ENCODE measurements at regions of chr3 and their contacts with region 1.

Region 1: GRCh38 chr3:187319699-187320302 is 28.3 kb upstream of the MASP1 start:
- DNase-seq: peak; percentile 77
- H3K4me3 Mint-ChIP-seq: no peak overlapping the region
- H3K27ac Mint-ChIP-seq: no peak overlapping the region
- H3K4me1 Mint-ChIP-seq: peaks cover 6% of the 10 kb centered on the region
- H3K27me3 Mint-ChIP-seq: peaks cover 41% of the 10 kb centered on the region
- CTCF ChIP-seq: peak; percentile 80

Region 2: DNA sequence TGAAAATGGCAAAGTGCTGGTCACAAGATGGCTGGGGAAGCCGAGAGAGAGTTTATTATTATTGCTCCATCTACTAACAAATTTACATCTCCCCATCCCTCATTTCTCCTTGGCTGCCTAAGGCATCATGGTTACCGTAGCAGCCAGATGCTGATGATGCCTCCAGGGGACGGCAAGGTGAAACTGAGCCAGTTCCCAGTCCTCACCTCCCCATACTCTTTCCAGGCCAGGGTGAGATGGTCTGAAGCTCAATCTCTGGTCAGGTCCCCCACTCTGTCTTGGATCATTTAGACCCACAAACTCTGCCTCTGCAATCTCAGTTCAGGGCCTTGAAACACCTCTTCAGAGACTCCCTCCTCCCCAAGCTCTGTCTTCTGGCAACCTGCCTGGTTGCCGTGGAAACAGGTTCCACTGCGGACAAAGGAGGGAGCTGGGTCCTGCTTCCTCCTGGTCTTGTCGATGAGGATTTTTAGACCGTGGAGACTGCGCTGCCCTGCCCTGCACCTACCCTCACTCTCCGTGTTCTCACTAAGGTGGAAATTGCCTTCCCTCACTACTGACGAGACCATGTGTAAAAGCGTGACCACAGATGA is 122.6 kb before region 1 on chr3 and contains the start of gene RTP1:
- CTCF ChIA-PET with region 1: interaction called, 15 read pairs
- POLR2A ChIA-PET with region 1: no interaction called
- intact Hi-C with region 1: no loop called
- DNase-seq: no peak
- H3K4me3 Mint-ChIP-seq: no peak within 1 kb of the TSS
- H3K27ac Mint-ChIP-seq: no peak within 1 kb of the TSS
- H3K4me1 Mint-ChIP-seq: peaks cover 10% of the 10 kb centered on the region
- H3K27me3 Mint-ChIP-seq: no peaks in the 10 kb centered on the region
- CTCF ChIP-seq: no peak
- total RNA-seq, gene RTP1: not detected in 2 replicates

Region 3: GRCh38 chr3:187252311-187252710 is 67.5 kb before region 1 on chr3:
- CTCF ChIA-PET with region 1: interaction called, 13 read pairs
- POLR2A ChIA-PET with region 1: no interaction called
- intact Hi-C with region 1: no loop called
- DNase-seq: no peak
- H3K4me3 Mint-ChIP-seq: no peak overlapping the region
- H3K27ac Mint-ChIP-seq: no peak overlapping the region
- H3K4me1 Mint-ChIP-seq: no peaks in the 10 kb centered on the region
- H3K27me3 Mint-ChIP-seq: peaks cover 16% of the 10 kb centered on the region
- CTCF ChIP-seq: no peak

Region 4: DNA sequence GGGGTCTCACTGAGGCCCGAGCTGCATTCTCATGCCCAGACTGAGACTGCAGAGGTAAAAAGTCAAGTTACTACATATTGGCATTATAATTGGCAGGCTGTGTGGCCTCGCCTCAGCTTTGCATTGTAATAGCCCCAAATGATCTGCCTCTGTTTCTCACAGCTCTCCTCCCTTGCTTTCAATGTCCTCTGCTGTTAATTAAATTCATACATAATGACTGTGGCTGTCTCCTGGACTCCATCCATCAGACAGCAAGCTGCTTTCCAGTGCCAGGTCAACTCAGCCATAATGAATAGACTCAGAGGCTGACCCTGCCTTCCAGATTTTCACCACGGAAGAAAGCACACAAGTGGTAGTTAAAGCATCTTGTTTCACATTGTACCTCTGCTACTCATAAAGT is 40.8 kb after region 1 on chr3:
- CTCF ChIA-PET with region 1: interaction called, 11 read pairs
- POLR2A ChIA-PET with region 1: no interaction called
- intact Hi-C with region 1: no loop called
- DNase-seq: no peak
- H3K4me3 Mint-ChIP-seq: no peak overlapping the region
- H3K27ac Mint-ChIP-seq: no peak overlapping the region
- H3K4me1 Mint-ChIP-seq: no peaks in the 10 kb centered on the region
- H3K27me3 Mint-ChIP-seq: no peaks in the 10 kb centered on the region
- CTCF ChIP-seq: no peak

Region 5: GRCh38 chr3:187490366-187490765 is 170.6 kb after region 1 on chr3:
- CTCF ChIA-PET with region 1: no interaction called
- POLR2A ChIA-PET with region 1: no interaction called
- intact Hi-C with region 1: no loop called
- DNase-seq: no peak
- H3K4me3 Mint-ChIP-seq: no peak overlapping the region
- H3K27ac Mint-ChIP-seq: no peak overlapping the region
- H3K4me1 Mint-ChIP-seq: no peaks in the 10 kb centered on the region
- H3K27me3 Mint-ChIP-seq: peaks cover 53% of the 10 kb centered on the region
- CTCF ChIP-seq: no peak

Region 6: GRCh38 chr3:187651282-187651681 is 331.5 kb after region 1 on chr3:
- CTCF ChIA-PET with region 1: interaction called, 10 read pairs
- POLR2A ChIA-PET with region 1: no interaction called
- intact Hi-C with region 1: no loop called
- DNase-seq: no peak
- H3K4me3 Mint-ChIP-seq: no peak overlapping the region
- H3K27ac Mint-ChIP-seq: no peak overlapping the region
- H3K4me1 Mint-ChIP-seq: no peaks in the 10 kb centered on the region
- H3K27me3 Mint-ChIP-seq: peaks cover 88% of the 10 kb centered on the region
- CTCF ChIP-seq: no peak

Region 7: GRCh38 chr3:187694801-187695200 is 375.0 kb after region 1 on chr3:
- CTCF ChIA-PET with region 1: interaction called, 24 read pairs
- POLR2A ChIA-PET with region 1: no interaction called
- intact Hi-C with region 1: no loop called
- DNase-seq: no peak
- H3K4me3 Mint-ChIP-seq: no peak overlapping the region
- H3K27ac Mint-ChIP-seq: no peak overlapping the region
- H3K4me1 Mint-ChIP-seq: no peaks in the 10 kb centered on the region
- H3K27me3 Mint-ChIP-seq: peaks cover 59% of the 10 kb centered on the region
- CTCF ChIP-seq: no peak

Region 8: GRCh38 chr3:187725653-187726370 is 406.0 kb after region 1 on chr3:
- CTCF ChIA-PET with region 1: interaction called, 92 read pairs
- POLR2A ChIA-PET with region 1: no interaction called
- intact Hi-C with region 1: no loop called
- DNase-seq: no peak
- H3K4me3 Mint-ChIP-seq: no peak overlapping the region
- H3K27ac Mint-ChIP-seq: no peak overlapping the region
- H3K4me1 Mint-ChIP-seq: no peaks in the 10 kb centered on the region
- H3K27me3 Mint-ChIP-seq: no peaks in the 10 kb centered on the region
- CTCF ChIP-seq: no peak

Measured in MCF 10A (cell line).